ENCODE measurements at regions of chr6 and their contacts with region 1.

Region 1: GRCh38 chr6:56851541-56852259 is 103.2 kb upstream of the BEND6 start:
- DNase-seq: peak; percentile 89
- ATAC-seq: peak; percentile 89
- H3K4me3 ChIP-seq: peak overlapping the region; percentile 100
- H3K27ac ChIP-seq: peak overlapping the region; percentile 82
- H3K4me1 ChIP-seq: peaks cover 26% of the 10 kb centered on the region
- H3K27me3 ChIP-seq: no peaks in the 10 kb centered on the region
- CTCF ChIP-seq: peak; percentile 57 to 84 (median 78)
- EP300 ChIP-seq: peak in 1 of 2 experiments; percentile 68; a peak in 2 of 4 replicates
- POLR2A ChIP-seq: no peak
- RAD21 ChIP-seq: peak; percentile 90

Region 2: GRCh38 chr6:56359201-56359899 is 492.4 kb before region 1 on chr6:
- CTCF ChIA-PET with region 1: no interaction called
- POLR2A ChIA-PET with region 1: no interaction called
- RAD21 ChIA-PET with region 1: interaction called, 3 read pairs
- SMC1A ChIA-PET with region 1: interaction called, 3 read pairs
- in situ Hi-C with region 1: no loop called
- intact Hi-C with region 1: loop called (anchors 2 kb)
- DNase-seq: peak; percentile 26
- ATAC-seq: peak; percentile 94
- H3K4me3 ChIP-seq: no peak overlapping the region
- H3K27ac ChIP-seq: no peak overlapping the region
- H3K4me1 ChIP-seq: no peaks in the 10 kb centered on the region
- H3K27me3 ChIP-seq: no peaks in the 10 kb centered on the region
- CTCF ChIP-seq: peak; percentile 65 to 82 (median 77); a peak in 5 of 6 replicates
- EP300 ChIP-seq: no peak
- POLR2A ChIP-seq: no peak
- RAD21 ChIP-seq: peak; percentile 99

Region 3: GRCh38 chr6:56637640-56638039 is 214.1 kb before region 1 on chr6:
- CTCF ChIA-PET with region 1: interaction called, 88 read pairs
- POLR2A ChIA-PET with region 1: interaction called, 5 read pairs
- RAD21 ChIA-PET with region 1: interaction called, 17 read pairs
- SMC1A ChIA-PET with region 1: interaction called, 52 read pairs
- in situ Hi-C with region 1: loop called (anchors 10 kb)
- intact Hi-C with region 1: loop called (anchors 1 kb)
- DNase-seq: peak; percentile 7
- ATAC-seq: peak; percentile 52; the same call in 2 of the 3 replicates
- H3K4me3 ChIP-seq: no peak overlapping the region
- H3K27ac ChIP-seq: no peak overlapping the region
- H3K4me1 ChIP-seq: no peaks in the 10 kb centered on the region
- H3K27me3 ChIP-seq: no peaks in the 10 kb centered on the region
- CTCF ChIP-seq: peak; percentile 51 to 59 (median 55); a peak in 5 of 6 replicates
- EP300 ChIP-seq: no peak
- POLR2A ChIP-seq: no peak
- RAD21 ChIP-seq: peak; percentile 74

Region 4: GRCh38 chr6:56708810-56709597 is 142.7 kb before region 1 on chr6:
- CTCF ChIA-PET with region 1: interaction called, 468 read pairs
- POLR2A ChIA-PET with region 1: interaction called, 21 read pairs
- RAD21 ChIA-PET with region 1: interaction called, 276 read pairs
- SMC1A ChIA-PET with region 1: interaction called, 315 read pairs
- in situ Hi-C with region 1: no loop called
- intact Hi-C with region 1: loop called (anchors 1 kb)
- DNase-seq: no peak
- ATAC-seq: peak; percentile 72
- H3K4me3 ChIP-seq: no peak overlapping the region
- H3K27ac ChIP-seq: 0 out of 2 replicates have a peak overlapping the region, but pooled peaks have one; percentile 1
- H3K4me1 ChIP-seq: peaks cover 8% of the 10 kb centered on the region
- H3K27me3 ChIP-seq: no peaks in the 10 kb centered on the region
- CTCF ChIP-seq: peak; percentile 29 to 54 (median 53); a peak in 4 of 6 replicates
- EP300 ChIP-seq: no peak
- POLR2A ChIP-seq: no peak
- RAD21 ChIP-seq: peak; percentile 45

Region 5: DNA sequence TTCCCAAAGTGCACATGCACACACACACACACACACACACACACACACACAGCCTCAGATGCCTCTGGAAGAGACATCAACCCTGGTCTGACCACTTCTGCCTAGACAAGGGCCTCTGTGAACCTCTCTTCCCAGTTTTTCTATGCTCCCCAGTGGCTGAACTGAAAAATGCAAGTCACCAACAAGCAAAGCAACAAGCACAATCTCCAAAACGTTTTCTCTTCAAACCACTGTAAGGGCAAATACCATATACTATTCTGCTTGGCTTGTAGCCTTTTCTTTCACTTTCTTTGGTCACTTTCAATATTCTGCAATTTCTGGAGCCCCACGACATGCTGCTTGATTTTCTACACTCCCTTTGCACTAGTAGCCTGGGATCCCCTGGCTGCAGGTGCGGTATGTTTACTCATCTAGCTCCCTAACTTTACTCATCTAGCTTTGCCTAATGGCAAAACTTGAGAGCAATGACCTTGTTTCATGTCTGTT is 87.6 kb before region 1 on chr6:
- CTCF ChIA-PET with region 1: interaction called, 494 read pairs
- POLR2A ChIA-PET with region 1: interaction called, 20 read pairs
- RAD21 ChIA-PET with region 1: interaction called, 450 read pairs
- SMC1A ChIA-PET with region 1: interaction called, 358 read pairs
- in situ Hi-C with region 1: no loop called
- intact Hi-C with region 1: loop called (anchors 2 kb)
- DNase-seq: peak; percentile 84
- ATAC-seq: peak; percentile 51
- H3K4me3 ChIP-seq: peak overlapping the region; percentile 22; the same call in 1 of the 2 replicates
- H3K27ac ChIP-seq: peak overlapping the region; percentile 65
- H3K4me1 ChIP-seq: peaks cover 86% of the 10 kb centered on the region
- H3K27me3 ChIP-seq: no peaks in the 10 kb centered on the region
- CTCF ChIP-seq: peak; percentile 44 to 57 (median 57); a peak in 4 of 6 replicates
- EP300 ChIP-seq: peak in 1 of 2 experiments; percentile 30; a peak in 2 of 4 replicates
- POLR2A ChIP-seq: no peak
- RAD21 ChIP-seq: peak; percentile 60

Region 6: DNA sequence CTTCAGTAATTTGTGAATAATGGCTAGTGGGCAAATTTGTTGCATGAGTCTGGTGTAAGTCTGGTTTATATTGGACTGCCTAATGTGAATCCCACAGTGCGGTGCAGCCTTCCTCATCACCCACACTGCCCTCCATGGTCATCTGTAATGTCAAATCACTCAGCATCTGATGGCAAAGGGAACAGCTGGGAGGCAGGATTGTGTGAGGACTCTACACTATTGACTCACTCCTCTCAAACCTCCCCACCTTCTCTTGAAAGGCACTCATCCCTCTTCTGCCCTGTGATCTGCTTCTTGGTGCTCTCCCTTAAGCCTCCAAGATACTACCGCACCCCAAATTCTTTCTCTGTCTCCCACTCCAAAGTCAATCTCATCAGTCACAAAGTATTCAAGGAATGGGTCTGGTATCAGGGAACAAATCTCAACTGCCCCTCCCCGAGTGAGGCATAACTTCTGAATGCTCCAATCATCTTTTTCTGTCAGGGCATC is 42.8 kb before region 1 on chr6:
- CTCF ChIA-PET with region 1: interaction called, 11 read pairs
- POLR2A ChIA-PET with region 1: no interaction called
- RAD21 ChIA-PET with region 1: interaction called, 6 read pairs
- SMC1A ChIA-PET with region 1: interaction called, 18 read pairs
- in situ Hi-C with region 1: no loop called
- intact Hi-C with region 1: no loop called
- DNase-seq: no peak
- ATAC-seq: peak; percentile 67
- H3K4me3 ChIP-seq: no peak overlapping the region
- H3K27ac ChIP-seq: 0 out of 2 replicates have a peak overlapping the region, but pooled peaks have one; percentile 6
- H3K4me1 ChIP-seq: peaks cover 38% of the 10 kb centered on the region
- H3K27me3 ChIP-seq: no peaks in the 10 kb centered on the region
- CTCF ChIP-seq: no peak
- EP300 ChIP-seq: no peak
- POLR2A ChIP-seq: no peak
- RAD21 ChIP-seq: no peak

Region 7: GRCh38 chr6:56862415-56863175 is 10.9 kb after region 1 on chr6:
- CTCF ChIA-PET with region 1: interaction called, 49 read pairs
- POLR2A ChIA-PET with region 1: interaction called, 7 read pairs
- RAD21 ChIA-PET with region 1: interaction called, 39 read pairs
- SMC1A ChIA-PET with region 1: interaction called, 28 read pairs
- in situ Hi-C with region 1: no loop called
- intact Hi-C with region 1: no loop called
- DNase-seq: no peak
- ATAC-seq: peak; percentile 57
- H3K4me3 ChIP-seq: no peak overlapping the region
- H3K27ac ChIP-seq: no peak overlapping the region
- H3K4me1 ChIP-seq: peaks cover 17% of the 10 kb centered on the region
- H3K27me3 ChIP-seq: no peaks in the 10 kb centered on the region
- CTCF ChIP-seq: no peak
- EP300 ChIP-seq: no peak
- POLR2A ChIP-seq: no peak
- RAD21 ChIP-seq: no peak

Region 8: GRCh38 chr6:57040009-57040408 is 188.3 kb after region 1 on chr6:
- CTCF ChIA-PET with region 1: no interaction called
- POLR2A ChIA-PET with region 1: no interaction called
- RAD21 ChIA-PET with region 1: no interaction called
- SMC1A ChIA-PET with region 1: no interaction called
- in situ Hi-C with region 1: no loop called
- intact Hi-C with region 1: no loop called
- DNase-seq: no peak
- ATAC-seq: peak; percentile 58
- H3K4me3 ChIP-seq: no peak overlapping the region
- H3K27ac ChIP-seq: no peak overlapping the region
- H3K4me1 ChIP-seq: no peaks in the 10 kb centered on the region
- H3K27me3 ChIP-seq: no peaks in the 10 kb centered on the region
- CTCF ChIP-seq: peak in 1 of 3 experiments; percentile 10; a peak in 2 of 6 replicates
- EP300 ChIP-seq: no peak
- POLR2A ChIP-seq: no peak
- RAD21 ChIP-seq: no peak